ENCODE measurements at regions of chr22 and their contacts with region 1.

Region 1: GRCh38 chr22:19565382-19566278 is 41.4 kb upstream of the CLDN5 start:
- DNase-seq: no peak
- H3K4me3 ChIP-seq: no peak overlapping the region
- H3K27me3 ChIP-seq: no peaks in the 10 kb centered on the region; the same call in 1 of the 2 replicates
- CTCF ChIP-seq: no peak

Region 2: GRCh38 chr22:19438298-19438697 is 127.3 kb before region 1 on chr22:
- CTCF ChIA-PET with region 1: no interaction called
- POLR2A ChIA-PET with region 1: no interaction called
- DNase-seq: no peak
- H3K4me3 ChIP-seq: no peak overlapping the region
- H3K27me3 ChIP-seq: no peaks in the 10 kb centered on the region
- CTCF ChIP-seq: no peak

Region 3: GRCh38 chr22:19615867-19616581 is 50.4 kb after region 1 on chr22:
- CTCF ChIA-PET with region 1: no interaction called
- POLR2A ChIA-PET with region 1: interaction called, 10 read pairs
- DNase-seq: no peak
- H3K4me3 ChIP-seq: no peak overlapping the region
- H3K27me3 ChIP-seq: peaks cover 18% of the 10 kb centered on the region
- CTCF ChIP-seq: no peak